Activated CD4-positive, alpha-beta memory T cell treated with anti-CD3 and anti-CD28 coated beads for 36 hours (primary cell): ENCODE measurements at regions of chr6 and their contacts with region 1.

Region 1: DNA sequence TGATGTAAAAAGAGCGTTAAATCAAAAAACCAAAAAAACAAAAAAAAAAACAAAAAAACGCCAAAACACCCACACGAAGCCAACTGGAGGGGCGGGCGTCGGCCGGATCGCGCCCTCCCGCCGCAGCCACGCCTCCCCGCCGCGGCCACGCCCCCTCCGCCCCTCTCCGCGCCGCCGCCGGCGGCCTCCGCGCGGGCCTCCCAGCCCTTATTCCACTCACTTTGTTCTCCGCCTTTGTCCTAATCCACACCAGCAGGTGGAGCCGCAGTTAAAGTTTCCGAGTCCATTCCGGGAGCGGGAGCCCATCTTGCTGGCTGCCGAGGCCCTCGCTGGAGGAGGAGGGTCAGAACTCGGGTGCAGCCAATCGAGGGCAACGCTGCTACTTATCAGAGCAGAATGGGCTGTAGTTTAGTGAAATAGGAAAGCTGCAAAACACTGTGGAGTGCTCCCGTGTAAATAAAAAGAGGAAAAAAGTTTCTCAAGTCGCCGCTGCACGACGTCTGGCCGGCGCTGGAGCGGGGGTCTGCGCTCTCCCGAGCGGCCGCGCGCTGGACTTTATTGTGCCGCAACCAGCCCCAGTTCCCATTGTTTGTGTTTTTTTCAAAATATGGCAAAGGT is at the start of gene ASF1A:
- DNase-seq: peak; percentile 98
- H3K4me3 Mint-ChIP-seq: peak within 1 kb of the TSS; percentile 88
- H3K27ac Mint-ChIP-seq: peak within 1 kb of the TSS; percentile 98
- H3K4me1 Mint-ChIP-seq: peaks cover 51% of the 10 kb centered on the region
- H3K27me3 Mint-ChIP-seq: peaks cover 1% of the 10 kb centered on the region
- total RNA-seq, gene ASF1A: 32.5 to 32.7 TPM

Region 2: DNA sequence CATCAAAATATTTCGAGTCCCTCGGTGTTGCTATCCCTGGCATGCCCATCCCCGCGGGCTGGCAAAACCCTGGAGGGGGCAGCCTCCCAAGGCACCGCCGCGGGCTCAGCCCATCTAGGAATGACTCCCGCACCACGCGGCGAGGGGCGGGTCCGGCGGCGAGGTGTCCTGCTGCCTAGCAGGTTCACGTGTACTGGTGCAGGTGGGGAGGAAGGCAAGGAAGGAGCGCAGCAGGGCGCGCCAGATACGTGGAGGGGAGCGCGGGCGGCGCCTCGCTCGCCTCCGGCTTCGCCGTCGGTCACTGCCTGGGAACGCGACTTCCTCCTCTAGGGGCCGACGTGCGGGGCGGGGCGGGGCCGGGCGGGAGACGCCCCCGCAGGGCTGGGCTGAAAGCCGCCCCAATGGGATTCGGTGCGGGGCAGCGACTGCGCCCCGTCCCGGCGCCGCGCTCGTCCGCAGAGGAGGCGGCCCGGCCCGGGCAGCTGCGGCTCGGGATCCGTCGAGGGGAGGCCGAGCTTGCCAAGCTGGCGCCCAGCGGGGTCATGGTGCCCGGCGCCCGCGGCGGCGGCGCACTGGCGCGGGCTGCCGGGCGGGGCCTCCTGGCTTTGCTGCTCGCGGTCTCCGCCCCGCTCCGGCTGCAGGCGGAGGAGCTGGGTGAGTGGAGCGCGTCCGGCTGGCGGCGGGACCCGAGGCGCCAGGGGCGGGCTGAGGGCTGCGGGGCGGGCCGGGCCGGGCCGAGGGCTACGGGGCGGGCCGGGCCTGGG is 1411.5 kb before region 1 on chr6 and contains the start of gene DCBLD1:
- CTCF ChIA-PET with region 1: no interaction called
- POLR2A ChIA-PET with region 1: no interaction called
- intact Hi-C with region 1: loop called (anchors 10 kb)
- DNase-seq: peak; percentile 74
- H3K4me3 Mint-ChIP-seq: peak within 1 kb of the TSS; percentile 82
- H3K27ac Mint-ChIP-seq: no peak within 1 kb of the TSS
- H3K4me1 Mint-ChIP-seq: peaks cover 12% of the 10 kb centered on the region
- H3K27me3 Mint-ChIP-seq: peaks cover 23% of the 10 kb centered on the region
- total RNA-seq, gene DCBLD1: 4.4 to 4.5 TPM

Region 3: GRCh38 chr6:118651282-118652050 is 242.4 kb before region 1 on chr6 and contains the start of gene CEP85L:
- CTCF ChIA-PET with region 1: interaction called, 3 read pairs
- POLR2A ChIA-PET with region 1: interaction called, 3 read pairs
- intact Hi-C with region 1: loop called (anchors 1 kb)
- DNase-seq: peak; percentile 93
- H3K4me3 Mint-ChIP-seq: peak within 1 kb of the TSS; percentile 87
- H3K27ac Mint-ChIP-seq: peak within 1 kb of the TSS; percentile 93
- H3K4me1 Mint-ChIP-seq: peaks cover 53% of the 10 kb centered on the region
- H3K27me3 Mint-ChIP-seq: no peaks in the 10 kb centered on the region
- total RNA-seq, gene CEP85L: 21.1 to 23.3 TPM

Region 4: DNA sequence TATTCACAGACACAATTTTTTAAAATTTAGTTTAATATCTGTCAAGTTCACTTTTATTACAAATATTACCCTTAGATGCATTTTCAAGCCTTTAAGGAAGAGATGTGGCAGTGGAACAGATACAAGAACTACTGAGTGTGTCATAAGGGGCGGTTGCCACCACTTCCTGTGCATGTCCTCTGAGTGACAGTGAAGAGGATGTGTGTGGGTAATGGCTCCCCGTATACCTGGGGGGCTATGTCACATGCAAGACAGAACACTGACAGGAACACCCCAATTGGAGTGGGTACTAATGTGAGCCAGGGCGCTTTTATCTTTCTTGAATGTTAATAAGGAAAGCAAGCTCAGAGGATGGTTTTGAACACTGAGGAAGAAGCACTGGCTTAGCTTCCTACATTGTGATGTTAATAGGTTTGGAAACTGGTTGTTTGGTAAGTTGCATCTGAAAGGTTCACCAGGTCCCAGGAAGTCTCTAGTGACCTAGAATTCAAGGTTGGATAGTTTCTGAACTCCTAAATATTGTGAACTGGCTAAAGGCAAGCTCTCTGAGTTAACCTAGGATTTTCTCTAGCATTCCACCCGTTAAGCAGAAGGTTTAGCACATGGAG is 83.4 kb before region 1 on chr6:
- CTCF ChIA-PET with region 1: interaction called, 12 read pairs
- POLR2A ChIA-PET with region 1: interaction called, 4 read pairs
- intact Hi-C with region 1: loop called (anchors 1 kb)
- DNase-seq: peak; percentile 77
- H3K4me3 Mint-ChIP-seq: no peak overlapping the region
- H3K27ac Mint-ChIP-seq: peak overlapping the region; percentile 77
- H3K4me1 Mint-ChIP-seq: peaks cover 55% of the 10 kb centered on the region
- H3K27me3 Mint-ChIP-seq: no peaks in the 10 kb centered on the region

Region 5: GRCh38 chr6:118934461-118935330 is 40.8 kb after region 1 on chr6 and contains the start of gene MCM9:
- CTCF ChIA-PET with region 1: interaction called, 7 read pairs
- POLR2A ChIA-PET with region 1: interaction called, 10 read pairs
- intact Hi-C with region 1: loop called (anchors 1 kb)
- DNase-seq: peak; percentile 94
- H3K4me3 Mint-ChIP-seq: peak within 1 kb of the TSS; percentile 81
- H3K27ac Mint-ChIP-seq: peak within 1 kb of the TSS; percentile 92
- H3K4me1 Mint-ChIP-seq: peaks cover 23% of the 10 kb centered on the region
- H3K27me3 Mint-ChIP-seq: no peaks in the 10 kb centered on the region
- total RNA-seq, gene MCM9: 14.4 to 14.7 TPM

Region 6: DNA sequence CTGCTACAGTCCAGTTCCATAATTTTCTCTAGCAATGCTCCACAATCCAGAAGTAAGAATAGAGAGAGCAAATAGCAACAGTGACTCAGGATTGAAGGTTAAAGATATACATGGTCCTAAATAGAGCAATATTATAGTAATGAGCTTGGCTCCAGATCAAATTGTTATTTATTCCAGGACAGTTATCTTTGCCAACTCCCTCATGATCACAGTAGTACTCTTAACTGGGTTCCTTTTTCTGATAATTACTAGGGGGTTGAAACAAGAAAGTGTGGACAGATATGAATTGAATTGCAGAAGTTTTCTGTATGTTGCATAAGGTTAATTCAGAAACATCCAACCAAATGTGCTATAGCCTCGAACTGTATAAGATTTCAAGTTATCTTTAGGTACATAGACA is 172.6 kb after region 1 on chr6:
- CTCF ChIA-PET with region 1: no interaction called
- POLR2A ChIA-PET with region 1: no interaction called
- intact Hi-C with region 1: no loop called
- DNase-seq: no peak
- H3K4me3 Mint-ChIP-seq: no peak overlapping the region
- H3K27ac Mint-ChIP-seq: no peak overlapping the region
- H3K4me1 Mint-ChIP-seq: no peaks in the 10 kb centered on the region
- H3K27me3 Mint-ChIP-seq: no peaks in the 10 kb centered on the region

Region 7: GRCh38 chr6:119313937-119314884 is 420.3 kb after region 1 on chr6:
- CTCF ChIA-PET with region 1: no interaction called
- POLR2A ChIA-PET with region 1: no interaction called
- intact Hi-C with region 1: loop called (anchors 10 kb)
- DNase-seq: peak; percentile 61
- H3K4me3 Mint-ChIP-seq: peak overlapping the region; percentile 22
- H3K27ac Mint-ChIP-seq: peak overlapping the region; percentile 89
- H3K4me1 Mint-ChIP-seq: peaks cover 56% of the 10 kb centered on the region
- H3K27me3 Mint-ChIP-seq: no peaks in the 10 kb centered on the region